ENCODE measurements at regions of chr20 and their contacts with region 1.

Region 1: GRCh38 chr20:16476032-16476431 is 97.2 kb downstream of the KIF16B start:
- DNase-seq: no peak
- ATAC-seq: peak in 3 of 4 donors; percentile 58 to 78 (median 62)
- H3K4me3 ChIP-seq: no peak overlapping the region
- H3K27ac ChIP-seq: no peak overlapping the region
- H3K4me1 ChIP-seq: peaks cover 0 to 22% (median 1%) of the 10 kb centered on the region in 12 donors
- H3K27me3 ChIP-seq: no peaks in the 10 kb centered on the region
- CTCF ChIP-seq: peak; percentile 53 to 80 (median 70)
- POLR2A ChIP-seq: no peak

Region 2: DNA sequence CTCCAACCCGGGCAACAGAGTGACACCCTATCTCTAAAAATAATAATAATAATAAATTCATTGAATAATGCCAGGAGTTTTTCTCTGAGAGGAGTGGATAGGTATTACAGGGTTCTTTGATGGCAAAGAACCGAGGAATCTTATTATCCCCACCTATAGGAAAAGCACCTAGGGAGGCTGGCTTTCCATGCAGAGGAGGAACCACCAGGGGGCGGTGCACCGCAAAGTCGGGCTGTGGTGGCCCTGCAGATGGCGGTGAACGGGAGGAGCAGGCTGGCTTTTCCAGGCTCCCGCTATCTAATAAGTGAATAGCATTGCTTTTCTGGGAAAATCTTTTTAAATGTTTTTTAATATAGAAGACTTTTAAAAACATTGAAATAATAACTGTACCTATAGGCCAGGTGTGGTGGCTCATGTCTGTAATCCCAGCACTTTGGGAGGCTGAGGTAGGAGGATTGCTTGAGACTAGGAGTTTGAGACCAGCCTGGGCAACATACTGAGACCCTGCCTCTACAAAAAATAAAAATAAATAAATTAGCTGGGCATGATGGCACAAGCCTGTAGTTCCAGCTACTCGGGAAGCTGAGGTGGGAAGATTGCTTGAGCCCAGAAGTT is 766.9 kb before region 1 on chr20:
- intact Hi-C with region 1: loop called in 4 of 10 experiments (anchors 2 to 10 kb)
- DNase-seq: peak in 4 of 5 donors; percentile 24 to 66 (median 28)
- ATAC-seq: no peak
- H3K4me3 ChIP-seq: no peak overlapping the region
- H3K27ac ChIP-seq: no peak overlapping the region
- H3K4me1 ChIP-seq: no peaks in the 10 kb centered on the region
- H3K27me3 ChIP-seq: no peaks in the 10 kb centered on the region
- CTCF ChIP-seq: peak in 11 of 12 donors; percentile 13 to 57 (median 45)
- POLR2A ChIP-seq: no peak

Region 3: DNA sequence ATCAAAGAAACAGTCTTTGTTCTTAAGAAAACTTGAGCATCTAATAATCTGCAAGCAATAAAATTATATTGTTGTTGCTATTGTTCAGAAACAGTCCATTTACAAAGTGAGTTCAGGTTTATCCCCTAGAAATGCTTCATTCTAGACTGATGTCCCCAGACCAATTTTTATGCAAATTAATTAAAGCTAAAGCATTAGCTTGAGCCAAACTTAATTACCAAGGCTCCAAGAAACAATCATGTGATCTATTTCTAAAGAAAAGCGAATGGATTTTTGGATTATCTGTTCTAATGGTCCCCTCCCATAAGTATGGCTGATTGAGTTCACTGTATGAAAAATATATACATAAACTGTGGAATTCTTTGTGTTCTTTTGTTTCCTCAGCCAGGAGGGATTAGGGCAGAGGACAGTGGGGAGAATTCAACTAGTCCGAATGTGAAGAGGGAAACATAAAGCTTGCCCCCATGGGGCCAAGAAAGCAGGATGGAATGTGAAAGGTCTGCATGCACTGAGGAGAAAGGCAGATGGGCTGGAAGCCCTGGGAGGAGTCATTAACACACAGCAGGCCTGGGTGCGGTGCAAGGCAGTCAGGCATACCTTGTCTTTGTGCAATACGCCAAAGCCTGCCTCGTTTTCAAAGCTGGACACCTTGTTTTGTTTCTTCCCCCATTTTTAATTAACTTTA is 499.8 kb before region 1 on chr20:
- intact Hi-C with region 1: no loop called
- DNase-seq: no peak
- ATAC-seq: no peak
- H3K4me3 ChIP-seq: no peak overlapping the region
- H3K27ac ChIP-seq: no peak overlapping the region
- H3K4me1 ChIP-seq: no peaks in the 10 kb centered on the region
- H3K27me3 ChIP-seq: no peaks in the 10 kb centered on the region
- CTCF ChIP-seq: no peak
- POLR2A ChIP-seq: no peak

Region 4: GRCh38 chr20:16241915-16242314 is 234.1 kb before region 1 on chr20:
- intact Hi-C with region 1: loop called in 1 of 10 experiments (anchors 10 kb)
- DNase-seq: no peak
- ATAC-seq: peak in 3 of 4 donors; percentile 31 to 67 (median 49)
- H3K4me3 ChIP-seq: no peak overlapping the region
- H3K27ac ChIP-seq: no peak overlapping the region
- H3K4me1 ChIP-seq: no peaks in the 10 kb centered on the region
- H3K27me3 ChIP-seq: no peaks in the 10 kb centered on the region
- CTCF ChIP-seq: peak in 3 of 12 donors; percentile 8 to 18 (median 11)
- POLR2A ChIP-seq: no peak

Region 5: DNA sequence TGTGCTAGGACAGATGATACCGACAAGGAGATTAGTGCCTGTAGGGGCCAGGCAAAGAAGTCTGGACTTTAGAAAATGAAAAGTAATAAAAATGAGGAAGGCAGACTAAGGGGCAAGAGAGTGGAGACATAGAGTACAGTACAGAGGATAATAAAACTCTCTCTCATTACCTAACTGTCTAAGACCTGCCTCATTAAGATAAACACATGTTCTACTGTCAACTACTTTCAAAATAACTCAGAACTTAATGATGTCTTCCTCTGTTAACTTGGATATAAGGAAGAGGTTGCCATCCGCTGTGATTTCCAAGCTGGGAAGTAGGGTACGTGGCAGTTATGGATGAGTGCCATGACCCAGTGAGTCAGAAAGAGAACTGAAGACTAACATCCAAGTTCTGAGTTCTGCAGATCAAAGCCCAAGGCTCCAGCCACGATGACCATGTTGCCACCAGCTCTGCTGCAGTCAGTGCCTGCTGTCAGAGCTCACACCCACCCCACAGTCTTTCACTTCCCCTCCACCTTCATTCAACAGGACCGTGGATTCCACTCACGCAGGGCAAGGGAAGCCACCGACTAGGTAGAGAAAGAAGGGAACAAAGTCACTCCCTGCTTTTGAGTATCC is 15.4 kb after region 1 on chr20:
- intact Hi-C with region 1: no loop called
- DNase-seq: no peak
- ATAC-seq: peak in 3 of 4 donors; percentile 10 to 36 (median 18)
- H3K4me3 ChIP-seq: no peak overlapping the region
- H3K27ac ChIP-seq: no peak overlapping the region
- H3K4me1 ChIP-seq: no peaks in the 10 kb centered on the region
- H3K27me3 ChIP-seq: no peaks in the 10 kb centered on the region
- CTCF ChIP-seq: no peak
- POLR2A ChIP-seq: no peak